PC-9 (cell line): ENCODE measurements at regions of chr11 and their contacts with region 1.

Region 1: GRCh38 chr11:35391922-35392813 is 27.2 kb downstream of the SLC1A2 start:
- DNase-seq: peak; percentile 86 to 90
- H3K4me3 ChIP-seq: peak overlapping the region; percentile 16; the same call in 1 of the 2 replicates
- H3K27ac ChIP-seq: peak overlapping the region; percentile 72
- H3K4me1 ChIP-seq: peaks cover 49% of the 10 kb centered on the region
- H3K27me3 ChIP-seq: no peaks in the 10 kb centered on the region
- CTCF ChIP-seq: peak; percentile 99

Region 2: DNA sequence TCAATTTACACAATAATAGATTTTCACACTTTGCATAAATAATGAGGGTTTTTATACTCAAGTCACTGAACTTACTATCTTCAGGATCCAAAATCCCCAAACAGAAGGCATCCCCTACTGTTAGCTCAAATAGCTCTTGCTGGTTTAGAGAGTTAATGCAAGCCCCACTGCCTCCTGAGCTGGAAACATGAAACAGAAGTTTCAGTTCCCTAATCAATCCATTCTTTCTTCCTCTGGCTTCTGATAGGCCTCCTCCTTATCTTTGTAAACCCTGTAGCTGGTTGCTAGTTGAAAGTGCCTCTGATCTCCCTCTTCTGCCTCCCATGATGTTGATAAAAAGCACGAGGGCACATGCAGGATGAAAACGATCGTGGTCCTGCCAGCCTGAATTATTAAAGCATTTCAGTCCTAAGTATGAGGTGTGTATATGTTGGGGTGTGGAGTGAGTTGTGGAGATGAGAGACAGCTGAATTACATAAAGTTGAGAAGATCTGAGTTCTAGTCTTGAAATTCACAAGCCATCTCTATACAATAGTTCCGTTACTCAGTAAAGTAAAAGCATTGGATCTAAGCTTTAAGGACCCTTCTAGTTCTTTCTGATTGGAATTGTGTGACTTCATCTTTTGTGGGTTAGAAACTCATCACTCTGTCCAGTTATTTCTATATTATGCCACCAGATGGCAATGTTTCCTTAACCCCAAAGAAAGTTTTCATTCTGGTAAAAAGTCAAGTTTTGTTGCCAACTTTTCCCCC is 806.3 kb before region 1 on chr11:
- CTCF ChIA-PET with region 1: no interaction called
- POLR2A ChIA-PET with region 1: no interaction called
- intact Hi-C with region 1: loop called (anchors 5 kb)
- DNase-seq: peak in 1 of 2 experiments; percentile 64
- H3K4me3 ChIP-seq: no peak overlapping the region
- H3K27ac ChIP-seq: peak overlapping the region; percentile 4; the same call in 1 of the 2 replicates
- H3K4me1 ChIP-seq: peaks cover 35% of the 10 kb centered on the region
- H3K27me3 ChIP-seq: no peaks in the 10 kb centered on the region
- CTCF ChIP-seq: peak; percentile 94

Region 3: DNA sequence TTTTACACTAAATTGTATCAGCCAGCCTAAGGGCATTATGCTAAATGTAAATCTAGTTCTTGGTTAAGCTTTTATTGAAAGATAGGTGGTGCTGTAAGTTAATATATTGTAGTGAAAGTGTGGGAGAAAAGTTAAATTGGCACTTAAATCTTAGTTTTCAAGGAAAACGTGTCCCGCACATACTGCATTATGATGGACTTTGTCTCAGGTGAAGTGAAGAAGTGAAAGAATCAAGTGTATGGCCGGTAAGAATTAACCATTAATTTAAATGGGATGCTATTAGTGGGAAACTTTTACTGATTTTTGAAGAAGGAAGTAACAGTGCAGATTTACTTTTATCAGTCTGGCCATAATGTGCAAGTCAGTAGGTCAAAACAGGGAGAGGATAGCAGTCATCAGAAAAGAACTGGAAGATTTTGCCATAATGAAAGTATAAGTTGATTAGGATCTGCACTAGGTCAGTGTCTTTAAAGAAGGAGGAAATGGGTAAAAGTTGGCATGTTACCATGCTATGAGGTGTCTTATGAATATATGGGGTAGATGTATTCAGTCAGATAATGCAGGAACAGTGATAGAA is 394.1 kb before region 1 on chr11:
- CTCF ChIA-PET with region 1: interaction called, 3 read pairs
- POLR2A ChIA-PET with region 1: interaction called, 3 read pairs
- intact Hi-C with region 1: loop called (anchors 1 kb)
- DNase-seq: peak in 1 of 2 experiments; percentile 71
- H3K4me3 ChIP-seq: no peak overlapping the region
- H3K27ac ChIP-seq: peak overlapping the region; percentile 47
- H3K4me1 ChIP-seq: peaks cover 11% of the 10 kb centered on the region
- H3K27me3 ChIP-seq: no peaks in the 10 kb centered on the region
- CTCF ChIP-seq: peak; percentile 92

Region 4: DNA sequence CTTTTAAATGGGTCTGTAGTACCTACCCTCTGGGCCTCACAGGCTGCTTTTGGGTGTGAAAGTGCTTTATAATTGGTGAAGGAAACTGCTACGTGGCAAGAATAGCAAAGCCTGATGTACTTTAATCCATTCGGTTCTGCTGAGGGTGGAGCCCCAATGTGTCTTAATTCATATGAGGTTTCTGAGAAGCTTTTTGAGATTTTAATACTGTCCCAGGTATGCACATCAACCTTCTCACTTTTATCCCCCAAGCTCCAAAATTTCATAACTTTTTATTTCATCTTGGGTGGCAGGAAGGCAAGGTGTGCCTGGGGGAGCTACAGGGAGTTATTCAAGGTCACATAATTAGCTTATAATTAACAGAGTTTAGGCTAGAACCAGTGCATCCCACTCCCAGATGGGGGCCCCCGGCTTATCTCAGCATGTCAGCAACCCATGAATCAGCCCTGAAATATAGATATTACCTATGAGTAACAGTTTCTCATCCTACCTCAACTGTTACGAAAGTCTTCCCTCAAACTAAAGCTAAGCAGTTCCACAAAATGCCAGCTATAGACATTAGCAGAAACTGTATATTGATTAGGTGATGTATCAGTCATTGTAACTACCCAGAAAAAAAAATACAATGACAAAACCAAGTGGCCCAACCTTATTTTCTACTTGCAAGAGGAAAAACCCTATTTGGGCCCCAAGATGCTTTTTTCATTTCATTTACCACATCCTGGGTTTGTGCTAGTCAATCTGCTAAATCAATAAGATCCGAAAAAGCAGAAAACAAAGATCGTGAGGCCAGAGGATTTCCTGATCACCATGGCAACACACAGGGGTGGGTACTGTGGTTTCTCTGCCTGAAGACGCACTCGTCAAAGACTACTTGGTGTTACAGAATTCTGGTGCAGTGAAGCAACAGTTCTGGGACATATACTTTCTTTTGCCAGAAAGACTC is 226.5 kb before region 1 on chr11:
- CTCF ChIA-PET with region 1: no interaction called
- POLR2A ChIA-PET with region 1: interaction called, 4 read pairs
- intact Hi-C with region 1: loop called (anchors 5 kb)
- DNase-seq: peak in 1 of 2 experiments; percentile 85
- H3K4me3 ChIP-seq: peak overlapping the region; percentile 36
- H3K27ac ChIP-seq: peak overlapping the region; percentile 94
- H3K4me1 ChIP-seq: peaks cover 100% of the 10 kb centered on the region
- H3K27me3 ChIP-seq: no peaks in the 10 kb centered on the region
- CTCF ChIP-seq: no peak

Region 5: DNA sequence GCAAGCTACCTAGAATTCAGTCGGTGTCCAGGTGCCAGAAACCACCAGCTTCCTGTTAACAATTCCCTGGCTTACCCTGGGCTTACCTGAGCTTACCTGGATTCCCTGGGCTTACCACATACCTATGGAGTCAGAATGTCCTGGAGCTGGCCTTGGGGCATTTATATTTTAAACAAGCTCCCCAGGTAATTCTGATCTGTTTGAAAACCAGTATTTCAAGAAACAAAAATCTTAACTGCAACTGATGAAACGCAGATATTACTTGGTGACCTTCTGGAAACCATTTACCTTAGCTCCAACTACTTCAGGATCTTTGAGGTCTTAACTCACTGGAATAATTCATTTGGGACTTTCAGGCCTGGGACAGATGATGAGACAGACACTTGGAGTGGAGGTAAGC is 96.3 kb before region 1 on chr11:
- CTCF ChIA-PET with region 1: no interaction called
- POLR2A ChIA-PET with region 1: no interaction called
- intact Hi-C with region 1: loop called (anchors 2 kb)
- DNase-seq: peak; percentile 65 to 95
- H3K4me3 ChIP-seq: no peak overlapping the region
- H3K27ac ChIP-seq: peak overlapping the region; percentile 60
- H3K4me1 ChIP-seq: peaks cover 21% of the 10 kb centered on the region
- H3K27me3 ChIP-seq: no peaks in the 10 kb centered on the region
- CTCF ChIP-seq: no peak

Region 6: GRCh38 chr11:35404388-35404775 is 12.2 kb after region 1 on chr11:
- CTCF ChIA-PET with region 1: no interaction called
- POLR2A ChIA-PET with region 1: no interaction called
- intact Hi-C with region 1: no loop called
- DNase-seq: peak in 1 of 2 experiments; percentile 29
- H3K4me3 ChIP-seq: no peak overlapping the region
- H3K27ac ChIP-seq: no peak overlapping the region
- H3K4me1 ChIP-seq: no peaks in the 10 kb centered on the region
- H3K27me3 ChIP-seq: no peaks in the 10 kb centered on the region
- CTCF ChIP-seq: peak; percentile 66

Region 7: GRCh38 chr11:35454362-35454761 is 62.2 kb after region 1 on chr11:
- CTCF ChIA-PET with region 1: no interaction called
- POLR2A ChIA-PET with region 1: no interaction called
- intact Hi-C with region 1: no loop called
- DNase-seq: no peak
- H3K4me3 ChIP-seq: no peak overlapping the region
- H3K27ac ChIP-seq: no peak overlapping the region
- H3K4me1 ChIP-seq: no peaks in the 10 kb centered on the region
- H3K27me3 ChIP-seq: peaks cover 11% of the 10 kb centered on the region; the same call in 1 of the 2 replicates
- CTCF ChIP-seq: no peak

Region 8: DNA sequence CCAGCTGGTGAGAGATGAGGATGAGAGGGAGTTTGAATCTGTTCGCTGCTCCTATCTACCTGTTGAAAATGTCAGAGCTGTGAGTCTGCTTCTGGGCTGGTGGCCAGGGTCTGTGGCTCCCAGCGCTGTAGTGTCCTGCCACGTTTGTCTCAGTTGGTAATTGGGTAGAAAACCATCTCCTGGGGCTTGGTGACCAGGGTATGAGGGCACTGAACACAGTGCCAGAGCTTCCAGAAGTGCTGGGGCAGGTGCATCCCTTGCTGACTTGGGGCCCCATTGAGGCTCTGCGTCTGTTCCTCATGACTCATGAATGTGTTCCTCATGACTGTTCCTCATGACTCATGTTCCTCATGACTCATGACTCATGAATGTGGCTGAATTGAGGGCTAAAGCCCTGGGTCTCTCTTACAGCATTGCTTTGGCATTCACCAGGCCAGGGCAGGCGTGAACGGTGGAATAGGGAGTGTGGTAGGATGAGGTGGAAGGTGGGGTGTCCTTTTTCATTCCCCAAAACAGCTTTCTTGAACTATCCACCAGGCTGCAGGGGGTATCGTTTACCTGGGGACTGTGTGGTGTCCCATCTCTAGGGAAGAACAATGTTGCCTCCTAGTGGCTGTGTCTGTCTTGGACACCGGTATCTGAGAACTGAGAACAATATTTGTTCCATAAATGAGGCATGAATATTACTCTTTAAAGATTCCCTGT is 757.5 kb after region 1 on chr11:
- CTCF ChIA-PET with region 1: no interaction called
- POLR2A ChIA-PET with region 1: no interaction called
- intact Hi-C with region 1: loop called (anchors 1 kb)
- DNase-seq: peak; percentile 94 to 100
- H3K4me3 ChIP-seq: no peak overlapping the region; the same call in 1 of the 2 replicates
- H3K27ac ChIP-seq: peak overlapping the region; percentile 89
- H3K4me1 ChIP-seq: peaks cover 30% of the 10 kb centered on the region
- H3K27me3 ChIP-seq: no peaks in the 10 kb centered on the region
- CTCF ChIP-seq: peak; percentile 88